ENCODE measurements at regions of chr1 and their contacts with region 1.

Region 1: DNA sequence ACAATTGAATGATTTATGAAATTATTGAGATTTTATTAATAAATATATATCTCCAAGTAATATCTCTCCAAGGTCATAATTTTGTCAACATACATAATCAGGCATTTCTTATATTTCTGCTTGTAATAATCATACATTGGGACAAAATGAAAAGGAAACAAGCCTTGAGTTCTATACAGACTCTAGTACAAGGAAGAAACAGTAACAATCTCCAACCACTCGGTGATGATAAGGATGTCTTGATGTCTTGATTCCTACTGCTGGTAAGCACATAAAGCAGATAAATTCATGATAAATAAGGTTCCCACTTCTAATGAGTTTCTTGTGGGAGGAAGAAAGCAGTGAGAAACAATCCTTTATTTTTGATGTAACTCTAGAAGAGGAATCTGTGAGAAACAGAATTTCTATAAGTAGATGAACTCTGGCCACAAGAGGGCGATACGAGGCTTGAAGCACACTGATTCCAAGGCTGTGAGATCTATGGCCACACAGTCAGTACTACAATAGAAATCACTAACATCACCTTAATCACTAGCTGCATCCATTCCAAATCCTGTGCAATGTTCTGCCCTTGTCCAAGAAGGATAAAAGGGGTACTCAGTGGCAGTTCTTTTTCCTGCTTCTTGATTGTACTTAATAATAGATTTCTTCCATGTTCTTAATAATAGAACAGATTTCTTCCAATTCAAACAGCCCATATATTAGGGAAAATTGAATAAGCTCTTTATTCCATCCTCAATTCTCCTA is 41.4 kb upstream of the LRRC8B start:
- DNase-seq: peak; percentile 33 to 77
- ATAC-seq: peak; percentile 92 to 95
- H3K4me3 ChIP-seq: no peak overlapping the region
- H3K27ac ChIP-seq: no peak overlapping the region
- H3K4me1 ChIP-seq: no peaks in the 10 kb centered on the region
- CTCF ChIP-seq: peak; percentile 75
- EP300 ChIP-seq: no peak
- POLR2A ChIP-seq: no peak
- RAD21 ChIP-seq: peak; percentile 70

Region 2: DNA sequence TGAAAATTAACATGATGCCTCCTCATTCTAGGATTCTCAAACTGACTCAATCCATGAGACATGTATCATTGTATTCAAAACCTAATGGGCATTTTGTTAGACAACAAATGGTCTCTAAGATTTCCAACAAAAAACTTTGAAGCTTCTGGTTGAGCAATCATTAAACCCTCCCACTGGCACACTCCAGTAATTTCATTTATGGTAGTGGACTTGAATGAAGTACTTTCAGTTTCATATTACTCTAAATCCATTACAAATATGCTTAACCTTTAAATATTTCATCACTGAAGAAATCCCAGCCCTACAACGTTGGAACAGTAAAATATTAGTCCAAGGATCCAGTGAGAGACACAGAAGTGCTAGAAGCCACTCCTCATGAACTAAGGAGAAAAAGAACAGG is 75.8 kb before region 1 on chr1:
- CTCF ChIA-PET with region 1: no interaction called
- POLR2A ChIA-PET with region 1: no interaction called
- DNase-seq: no peak
- ATAC-seq: no peak
- H3K4me3 ChIP-seq: no peak overlapping the region
- H3K27ac ChIP-seq: no peak overlapping the region
- H3K4me1 ChIP-seq: no peaks in the 10 kb centered on the region
- CTCF ChIP-seq: no peak
- EP300 ChIP-seq: no peak
- POLR2A ChIP-seq: no peak
- RAD21 ChIP-seq: no peak

Region 3: GRCh38 chr1:89598450-89599331 is 115.5 kb after region 1 on chr1:
- CTCF ChIA-PET with region 1: interaction called, 23 read pairs
- POLR2A ChIA-PET with region 1: no interaction called
- DNase-seq: peak; percentile 31
- ATAC-seq: peak; percentile 90 to 93
- H3K4me3 ChIP-seq: no peak overlapping the region
- H3K27ac ChIP-seq: no peak overlapping the region
- H3K4me1 ChIP-seq: 0 out of 3 replicates have a peak, but pooled peaks cover under 1% of the 10 kb centered on the region
- CTCF ChIP-seq: peak; percentile 59
- EP300 ChIP-seq: no peak
- POLR2A ChIP-seq: no peak
- RAD21 ChIP-seq: peak; percentile 51 to 54; a peak in 4 of 5 replicates

Region 4: GRCh38 chr1:89605692-89606091 is 122.5 kb after region 1 on chr1:
- CTCF ChIA-PET with region 1: interaction called, 13 read pairs
- POLR2A ChIA-PET with region 1: no interaction called
- DNase-seq: no peak
- ATAC-seq: no peak
- H3K4me3 ChIP-seq: no peak overlapping the region
- H3K27ac ChIP-seq: no peak overlapping the region
- H3K4me1 ChIP-seq: peaks cover 6% of the 10 kb centered on the region; the same call in 1 of the 3 replicates
- CTCF ChIP-seq: no peak
- EP300 ChIP-seq: no peak
- POLR2A ChIP-seq: no peak
- RAD21 ChIP-seq: no peak